Activated CD8-positive, alpha-beta memory T cell treated with anti-CD3 and anti-CD28 coated beads, Interleukin-2, amount 10 ng/mL, durations not matched to agents 7 days and 5 days (primary cell): ENCODE measurements at regions of chr6 and their contacts with region 1.

Region 1: GRCh38 chr6:158072083-158072721 is 90.5 kb downstream of the SYNJ2 start:
- DNase-seq: peak; percentile 82
- ATAC-seq: peak; percentile 74
- H3K4me3 Mint-ChIP-seq: no peak overlapping the region
- H3K27ac Mint-ChIP-seq: peak overlapping the region; percentile 79
- H3K4me1 Mint-ChIP-seq: peaks cover 40% of the 10 kb centered on the region
- H3K27me3 Mint-ChIP-seq: no peaks in the 10 kb centered on the region

Region 2: GRCh38 chr6:157756708-157757429 is 315.3 kb before region 1 on chr6:
- CTCF ChIA-PET with region 1: interaction called, 16 read pairs
- DNase-seq: peak; percentile 85
- ATAC-seq: peak; percentile 44
- H3K4me3 Mint-ChIP-seq: no peak overlapping the region
- H3K27ac Mint-ChIP-seq: no peak overlapping the region
- H3K4me1 Mint-ChIP-seq: peaks cover 47% of the 10 kb centered on the region
- H3K27me3 Mint-ChIP-seq: peaks cover 52% of the 10 kb centered on the region

Region 3: DNA sequence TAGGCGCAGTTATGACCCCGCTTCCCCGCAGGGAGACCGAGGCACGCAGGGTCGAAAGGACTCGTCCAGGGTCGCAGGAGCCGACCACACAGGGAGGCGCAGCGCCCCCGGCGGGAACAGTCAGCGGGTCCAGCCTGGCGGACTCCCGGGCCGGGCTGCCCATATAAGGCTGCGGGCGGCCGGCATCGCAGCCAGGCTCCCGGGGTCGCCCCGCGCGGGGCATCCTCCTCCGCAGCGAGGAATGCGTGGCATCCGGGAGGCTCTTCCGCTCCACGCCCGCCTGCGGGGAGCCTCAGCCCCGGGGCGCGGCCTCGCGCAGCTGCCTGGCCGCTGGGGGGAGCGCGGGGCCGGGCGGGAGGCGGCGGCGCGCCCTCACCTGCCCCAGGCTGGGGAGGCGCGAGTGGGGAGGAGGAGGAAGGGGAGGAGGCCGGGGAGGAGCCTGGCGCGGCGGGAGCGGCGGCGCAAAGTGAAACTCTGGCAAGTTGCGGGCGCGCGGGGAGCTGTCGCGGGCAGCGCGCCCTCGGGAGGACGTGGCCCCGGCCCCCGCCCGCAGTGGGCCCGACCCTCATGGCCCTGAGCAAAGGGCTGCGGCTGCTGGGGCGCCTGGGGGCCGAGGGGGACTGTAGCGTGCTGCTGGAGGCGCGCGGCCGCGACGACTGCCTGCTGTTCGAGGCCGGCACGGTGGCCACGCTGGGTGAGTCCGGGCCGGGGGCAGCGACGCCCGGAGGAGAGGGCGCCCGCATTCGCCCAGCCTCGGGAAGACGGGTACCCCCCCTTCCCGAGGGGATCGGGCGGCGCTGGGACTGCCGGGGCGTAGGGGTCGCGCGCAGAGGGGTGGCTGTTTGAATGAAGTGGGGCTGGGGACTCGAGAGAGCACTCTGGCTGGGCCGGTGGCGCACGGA is 90.6 kb before region 1 on chr6 and contains the start of gene SYNJ2:
- CTCF ChIA-PET with region 1: interaction called, 38 read pairs
- DNase-seq: peak; percentile 90
- ATAC-seq: peak; percentile 92
- H3K4me3 Mint-ChIP-seq: peak within 1 kb of the TSS; percentile 89
- H3K27ac Mint-ChIP-seq: peak within 1 kb of the TSS; percentile 85
- H3K4me1 Mint-ChIP-seq: peaks cover 48% of the 10 kb centered on the region
- H3K27me3 Mint-ChIP-seq: peaks cover 14% of the 10 kb centered on the region
- total RNA-seq, gene SYNJ2: 41.2 to 42.7 TPM

Region 4: GRCh38 chr6:158047127-158047518 is 25.1 kb before region 1 on chr6:
- CTCF ChIA-PET with region 1: interaction called, 11 read pairs
- DNase-seq: peak; percentile 91
- ATAC-seq: peak; percentile 73
- H3K4me3 Mint-ChIP-seq: peak overlapping the region; percentile 9
- H3K27ac Mint-ChIP-seq: peak overlapping the region; percentile 83
- H3K4me1 Mint-ChIP-seq: peaks cover 36% of the 10 kb centered on the region
- H3K27me3 Mint-ChIP-seq: no peaks in the 10 kb centered on the region

Region 5: DNA sequence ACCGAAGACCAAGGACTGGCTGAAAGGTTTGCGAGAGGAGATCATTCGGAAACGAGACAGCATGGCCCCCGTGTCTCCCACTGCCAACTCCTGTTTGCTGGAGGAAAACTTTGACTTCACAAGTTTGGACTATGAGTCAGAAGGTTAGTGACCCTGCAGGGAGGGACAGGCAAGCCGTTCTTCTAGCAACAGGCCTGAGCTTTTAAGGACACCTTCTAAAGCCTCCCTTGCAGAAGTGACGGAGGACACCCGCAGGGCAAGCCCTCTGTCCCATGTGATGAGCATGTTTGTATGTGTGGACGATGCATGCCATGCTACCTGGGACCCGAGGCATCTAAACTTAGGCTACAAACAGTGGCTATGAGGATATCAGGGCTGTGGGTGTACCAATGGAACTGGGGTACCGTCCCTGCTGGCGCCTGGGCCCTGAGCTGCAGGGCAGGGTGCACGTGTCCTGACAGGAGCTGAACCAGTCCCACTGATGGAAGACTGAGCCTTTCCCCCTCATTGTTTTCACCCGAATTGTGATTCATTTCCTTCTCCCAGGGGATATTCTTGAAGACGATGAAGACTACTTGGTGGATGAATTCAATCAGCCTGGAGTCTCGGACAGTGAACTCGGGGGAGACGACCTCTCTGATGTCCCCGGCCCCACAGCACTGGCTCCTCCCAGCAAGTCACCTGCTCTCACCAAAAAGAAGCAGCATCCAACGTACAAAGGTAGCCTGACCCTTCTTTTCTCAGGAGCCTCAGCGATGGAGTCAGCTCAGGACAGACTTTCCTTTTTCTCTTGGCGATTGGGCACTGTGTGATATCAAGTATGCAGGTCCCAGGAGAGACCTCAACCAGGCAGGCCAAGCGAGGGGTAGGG is 11.5 kb after region 1 on chr6:
- CTCF ChIA-PET with region 1: interaction called, 12 read pairs
- DNase-seq: no peak
- ATAC-seq: no peak
- H3K4me3 Mint-ChIP-seq: no peak overlapping the region
- H3K27ac Mint-ChIP-seq: no peak overlapping the region
- H3K4me1 Mint-ChIP-seq: peaks cover 21% of the 10 kb centered on the region
- H3K27me3 Mint-ChIP-seq: no peaks in the 10 kb centered on the region